Panc1 (cell line): ENCODE measurements at regions of chr5 and their contacts with region 1.

Region 1: GRCh38 chr5:1167728-1168709 is 33.4 kb upstream of the SLC6A19 start:
- DNase-seq: peak; percentile 61
- ATAC-seq: peak; percentile 93
- H3K4me3 ChIP-seq: peak overlapping the region; percentile 46 to 66
- H3K27ac ChIP-seq: peak overlapping the region; percentile 63
- H3K4me1 ChIP-seq: peaks cover 16% of the 10 kb centered on the region
- H3K27me3 ChIP-seq: no peaks in the 10 kb centered on the region
- CTCF ChIP-seq: peak; percentile 95

Region 2: DNA sequence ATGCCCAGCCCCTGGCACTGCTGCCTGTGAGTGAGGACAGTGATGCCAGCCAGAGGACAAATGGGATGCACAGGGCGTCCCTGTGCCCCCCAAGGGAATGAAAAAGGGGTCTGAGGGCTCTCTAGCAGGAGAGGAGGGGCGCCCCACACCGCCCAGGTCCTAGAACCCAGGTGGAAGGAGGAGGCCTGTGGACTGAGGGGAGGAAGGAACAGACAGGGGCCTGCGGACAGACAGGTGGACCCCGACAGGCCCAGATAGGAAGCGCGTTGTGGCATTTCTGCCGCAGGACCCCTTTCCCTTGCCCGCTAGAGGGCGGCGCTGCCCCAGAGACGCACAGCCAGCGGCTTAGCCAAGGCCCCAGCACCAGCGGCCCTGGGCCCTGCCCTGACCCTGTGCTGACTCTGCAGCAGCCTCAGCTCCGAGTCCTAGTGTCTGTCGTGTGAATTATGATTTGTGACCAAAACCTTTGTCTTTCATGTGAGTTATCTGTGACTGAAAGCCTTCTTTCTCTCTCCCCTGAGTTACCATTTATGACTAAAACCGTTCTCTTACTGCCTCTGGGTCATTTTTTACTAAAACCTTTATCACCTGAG is 244.6 kb before region 1 on chr5:
- CTCF ChIA-PET with region 1: interaction called, 7 read pairs
- POLR2A ChIA-PET with region 1: no interaction called
- in situ Hi-C with region 1: no loop called
- intact Hi-C with region 1: loop called (anchors 2 kb)
- DNase-seq: peak; percentile 42
- ATAC-seq: peak; percentile 94
- H3K4me3 ChIP-seq: no peak overlapping the region
- H3K27ac ChIP-seq: peak overlapping the region; percentile 40; the same call in 1 of the 2 replicates
- H3K4me1 ChIP-seq: peaks cover 20% of the 10 kb centered on the region
- H3K27me3 ChIP-seq: no peaks in the 10 kb centered on the region; the same call in 1 of the 2 replicates
- CTCF ChIP-seq: peak; percentile 97

Region 3: GRCh38 chr5:1246711-1247431 is 78.9 kb after region 1 on chr5:
- CTCF ChIA-PET with region 1: no interaction called
- POLR2A ChIA-PET with region 1: no interaction called
- in situ Hi-C with region 1: no loop called
- intact Hi-C with region 1: loop called (anchors 10 kb)
- DNase-seq: no peak
- ATAC-seq: no peak
- H3K4me3 ChIP-seq: no peak overlapping the region
- H3K27ac ChIP-seq: no peak overlapping the region
- H3K4me1 ChIP-seq: no peaks in the 10 kb centered on the region
- H3K27me3 ChIP-seq: no peaks in the 10 kb centered on the region; the same call in 1 of the 2 replicates
- CTCF ChIP-seq: no peak